Esophagus muscularis mucosa (tissue), 4 donors: ENCODE measurements at regions of chr2 and their contacts with region 1.

Region 1: GRCh38 chr2:198296665-198297308 is 492.4 kb downstream of the PLCL1 start:
- DNase-seq: no peak
- H3K4me3 ChIP-seq: no peak overlapping the region
- H3K27ac ChIP-seq: no peak overlapping the region
- H3K4me1 ChIP-seq: peaks cover 0 to 8% (median 3%) of the 10 kb centered on the region in 4 donors
- H3K27me3 ChIP-seq: no peaks in the 10 kb centered on the region
- CTCF ChIP-seq: peak; percentile 75 to 87 (median 84)
- EP300 ChIP-seq: no peak
- POLR2A ChIP-seq: no peak

Region 2: GRCh38 chr2:198053776-198054698 is 242.8 kb before region 1 on chr2:
- intact Hi-C with region 1: loop called (anchors 10 kb)
- DNase-seq: no peak
- H3K4me3 ChIP-seq: no peak overlapping the region
- H3K27ac ChIP-seq: no peak overlapping the region
- H3K4me1 ChIP-seq: peaks cover 13 to 31% (median 23%) of the 10 kb centered on the region in 4 donors
- H3K27me3 ChIP-seq: no peaks in the 10 kb centered on the region
- CTCF ChIP-seq: peak in 1 of 3 experiments; percentile 45
- EP300 ChIP-seq: no peak
- POLR2A ChIP-seq: no peak

Region 3: DNA sequence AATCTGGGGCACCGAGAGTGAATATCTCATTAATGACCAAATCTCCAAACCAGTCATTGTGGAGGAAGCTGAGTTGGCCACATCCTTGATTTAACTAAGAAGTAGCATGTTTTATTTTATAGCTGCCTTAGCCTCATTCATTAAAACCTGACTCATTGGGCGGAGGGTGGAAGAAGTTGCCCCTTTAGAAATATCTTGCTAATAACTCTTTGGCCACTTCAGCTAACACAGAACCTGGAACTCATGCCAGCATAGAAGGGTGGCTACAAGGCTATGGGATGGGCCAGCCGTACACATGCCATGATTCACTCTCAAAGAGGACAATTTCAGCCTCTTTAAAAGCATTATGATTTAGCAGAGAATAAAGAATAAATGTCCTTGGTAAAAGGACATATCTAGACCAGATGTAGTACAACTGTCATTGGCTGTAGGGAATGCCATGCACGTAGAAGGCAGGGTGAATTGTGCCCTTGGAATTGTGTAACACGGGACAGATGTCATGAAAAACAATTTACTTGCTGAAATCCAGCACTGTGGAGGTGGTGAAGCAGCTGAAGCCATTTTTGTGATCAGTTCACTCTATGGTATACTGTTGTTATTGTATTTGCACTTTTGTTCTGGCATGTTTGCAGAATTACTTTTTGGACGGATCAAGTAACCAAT is 162.4 kb before region 1 on chr2:
- intact Hi-C with region 1: loop called (anchors 5 kb)
- DNase-seq: no peak
- H3K4me3 ChIP-seq: no peak overlapping the region
- H3K27ac ChIP-seq: no peak overlapping the region
- H3K4me1 ChIP-seq: peaks cover 12 to 35% (median 23%) of the 10 kb centered on the region in 4 donors
- H3K27me3 ChIP-seq: no peaks in the 10 kb centered on the region
- CTCF ChIP-seq: no peak
- EP300 ChIP-seq: no peak
- POLR2A ChIP-seq: no peak